Activated T-helper 1 cell treated with anti-CD3 and anti-CD28 coated beads, Interleukin-12 subunit alpha, Interleukin-12 subunit beta, Interleukin-2, Interleukin-4 antibody, amounts not matched to agents 30 ng/mL and 10 ng/mL and 1 ng/mL, durations not matched to agents 14 hours and 24 hours and 36 hours (primary cell): ENCODE measurements at regions of chr2 and their contacts with region 1.

Region 1: GRCh38 chr2:205680067-205680466 is 2.2 kb upstream of the NRP2 start:
- DNase-seq: peak; percentile 44
- H3K4me3 Mint-ChIP-seq: peak overlapping the region; percentile 43
- H3K27ac Mint-ChIP-seq: peak overlapping the region; percentile 22
- H3K4me1 Mint-ChIP-seq: peaks cover 45% of the 10 kb centered on the region
- H3K27me3 Mint-ChIP-seq: peaks cover 39% of the 10 kb centered on the region

Region 2: DNA sequence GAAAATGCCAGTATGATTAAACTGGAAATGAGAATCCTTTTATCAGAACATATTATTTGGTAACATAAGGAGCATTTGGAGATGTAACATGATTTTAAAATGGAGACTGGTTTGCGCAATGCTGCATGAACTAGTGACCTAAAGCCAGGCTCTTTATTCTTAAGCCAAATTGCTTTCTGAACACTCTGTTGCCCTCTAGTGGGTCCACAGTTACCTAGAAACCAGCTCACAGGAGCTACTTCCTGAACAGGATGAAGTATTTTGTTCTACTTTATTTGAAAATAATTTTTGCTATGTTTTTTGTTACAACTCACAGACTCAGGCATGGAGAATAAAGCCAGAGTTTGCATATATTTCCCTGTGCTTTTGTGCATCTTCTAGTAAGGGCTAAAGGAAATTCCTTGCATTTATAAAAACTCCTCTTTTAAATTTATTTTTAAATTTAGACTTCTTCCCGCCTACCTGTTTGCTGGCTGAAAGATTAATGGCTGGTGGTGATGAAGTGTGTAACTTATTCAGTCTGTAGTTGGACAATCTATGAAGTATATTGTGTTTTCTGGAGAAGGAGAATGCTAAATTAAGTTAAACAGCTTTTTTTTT is 988.1 kb before region 1 on chr2:
- intact Hi-C with region 1: loop called (anchors 5 kb)
- DNase-seq: no peak
- H3K4me3 Mint-ChIP-seq: no peak overlapping the region
- H3K27ac Mint-ChIP-seq: no peak overlapping the region
- H3K4me1 Mint-ChIP-seq: peaks cover 11% of the 10 kb centered on the region
- H3K27me3 Mint-ChIP-seq: peaks cover 3% of the 10 kb centered on the region

Region 3: GRCh38 chr2:205002390-205002789 is 677.7 kb before region 1 on chr2:
- intact Hi-C with region 1: loop called (anchors 10 kb)
- DNase-seq: peak; percentile 28
- H3K4me3 Mint-ChIP-seq: peak overlapping the region; percentile 2
- H3K27ac Mint-ChIP-seq: peak overlapping the region; percentile 59
- H3K4me1 Mint-ChIP-seq: peaks cover 40% of the 10 kb centered on the region
- H3K27me3 Mint-ChIP-seq: no peaks in the 10 kb centered on the region

Region 4: DNA sequence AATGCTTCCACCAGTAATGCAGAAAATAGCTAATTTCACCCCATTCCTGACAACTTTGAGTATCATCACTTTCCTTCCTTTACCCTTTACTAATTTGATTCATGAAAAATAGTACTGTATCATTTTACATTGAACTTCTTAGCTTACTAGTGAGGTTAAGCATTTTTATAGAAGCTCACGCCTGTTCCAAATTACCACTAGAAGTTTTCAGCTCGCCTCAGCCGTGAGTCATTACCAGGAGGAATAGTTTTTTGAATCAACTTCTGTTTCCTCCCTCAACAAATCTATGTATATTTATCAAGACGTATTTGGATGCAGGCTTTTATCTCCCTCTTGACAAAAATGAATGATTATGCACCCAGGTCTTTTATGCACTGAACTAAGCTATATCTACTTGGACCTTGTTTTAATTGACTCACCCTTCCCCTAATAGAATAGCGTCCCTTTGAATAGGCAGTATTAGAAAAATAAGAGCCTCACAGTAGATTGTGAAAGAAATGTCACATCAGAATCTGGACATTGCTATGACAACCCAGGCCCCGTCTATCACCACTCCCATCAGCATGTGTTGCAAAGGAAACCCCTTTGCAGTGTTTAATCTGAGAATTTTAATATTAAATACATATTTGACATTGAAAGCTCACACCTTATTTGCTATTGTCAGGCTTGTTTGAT is 205.2 kb before region 1 on chr2:
- intact Hi-C with region 1: loop called (anchors 5 kb)
- DNase-seq: no peak
- H3K4me3 Mint-ChIP-seq: no peak overlapping the region
- H3K27ac Mint-ChIP-seq: no peak overlapping the region
- H3K4me1 Mint-ChIP-seq: no peaks in the 10 kb centered on the region
- H3K27me3 Mint-ChIP-seq: peaks cover 7% of the 10 kb centered on the region

Region 5: GRCh38 chr2:205612636-205613035 is 67.4 kb before region 1 on chr2:
- intact Hi-C with region 1: loop called (anchors 2 kb)
- DNase-seq: peak; percentile 21
- H3K4me3 Mint-ChIP-seq: peak overlapping the region; percentile 59
- H3K27ac Mint-ChIP-seq: peak overlapping the region; percentile 92
- H3K4me1 Mint-ChIP-seq: peaks cover 38% of the 10 kb centered on the region
- H3K27me3 Mint-ChIP-seq: peaks cover 12% of the 10 kb centered on the region

Region 6: DNA sequence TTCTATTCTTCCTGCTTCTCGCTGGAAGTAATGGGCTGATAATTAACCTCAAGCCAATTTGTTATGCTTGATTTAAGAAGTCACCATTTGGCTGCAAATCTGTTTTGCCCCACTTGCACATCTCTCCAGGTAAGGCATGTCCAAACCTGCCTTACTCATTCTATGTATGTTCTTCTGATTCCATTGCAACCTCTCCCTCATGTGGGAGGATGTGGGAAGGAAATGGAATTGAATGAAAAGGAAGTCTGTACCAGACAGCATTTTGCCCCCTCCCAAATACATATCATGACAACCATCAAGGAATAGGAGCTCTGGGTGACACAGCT is 133.9 kb after region 1 on chr2:
- intact Hi-C with region 1: loop called (anchors 5 kb)
- DNase-seq: no peak
- H3K4me3 Mint-ChIP-seq: no peak overlapping the region
- H3K27ac Mint-ChIP-seq: no peak overlapping the region
- H3K4me1 Mint-ChIP-seq: no peaks in the 10 kb centered on the region
- H3K27me3 Mint-ChIP-seq: peaks cover 14% of the 10 kb centered on the region